Activated CD8-positive, alpha-beta memory T cell treated with anti-CD3 and anti-CD28 coated beads, Interleukin-2, amount 10 ng/mL, durations not matched to agents 7 days and 5 days (primary cell): ENCODE measurements at regions of chr17 and their contacts with region 1.

Region 1: GRCh38 chr17:57130761-57131461 is 45.9 kb downstream of the AKAP1 start:
- DNase-seq: peak; percentile 87
- ATAC-seq: peak; percentile 89
- H3K4me3 Mint-ChIP-seq: no peak overlapping the region
- H3K27ac Mint-ChIP-seq: no peak overlapping the region
- H3K4me1 Mint-ChIP-seq: peaks cover 2% of the 10 kb centered on the region
- H3K27me3 Mint-ChIP-seq: no peaks in the 10 kb centered on the region

Region 2: GRCh38 chr17:57255776-57256681 is 125.1 kb after region 1 on chr17 and contains the start of gene MSI2:
- CTCF ChIA-PET with region 1: no interaction called
- DNase-seq: peak; percentile 96
- ATAC-seq: peak; percentile 86
- H3K4me3 Mint-ChIP-seq: peak within 1 kb of the TSS; percentile 82
- H3K27ac Mint-ChIP-seq: peak within 1 kb of the TSS; percentile 91
- H3K4me1 Mint-ChIP-seq: peaks cover 37% of the 10 kb centered on the region
- H3K27me3 Mint-ChIP-seq: no peaks in the 10 kb centered on the region
- total RNA-seq, gene MSI2: 117 to 120 TPM

Region 3: GRCh38 chr17:57747221-57748017 is 616.5 kb after region 1 on chr17:
- CTCF ChIA-PET with region 1: interaction called, 11 read pairs
- DNase-seq: peak; percentile 57
- ATAC-seq: peak; percentile 74
- H3K4me3 Mint-ChIP-seq: no peak overlapping the region
- H3K27ac Mint-ChIP-seq: no peak overlapping the region
- H3K4me1 Mint-ChIP-seq: peaks cover 13% of the 10 kb centered on the region
- H3K27me3 Mint-ChIP-seq: peaks cover 11% of the 10 kb centered on the region